ENCODE measurements at regions of chr1 and their contacts with region 1.

Region 1: GRCh38 chr1:149899460-149900293 is at the start of gene BOLA1:
- DNase-seq: peak; percentile 96
- total RNA-seq, gene BOLA1: 13.8 TPM

Region 2: GRCh38 chr1:149927503-149928387 is 28.1 kb after region 1 on chr1 and contains the start of gene SF3B4:
- intact Hi-C with region 1: loop called (anchors 2 kb)
- DNase-seq: peak; percentile 99
- total RNA-seq, gene SF3B4: 30.3 TPM

Region 3: GRCh38 chr1:150053926-150054325 is 154.2 kb after region 1 on chr1:
- intact Hi-C with region 1: loop called (anchors 10 kb)
- DNase-seq: no peak

Region 4: DNA sequence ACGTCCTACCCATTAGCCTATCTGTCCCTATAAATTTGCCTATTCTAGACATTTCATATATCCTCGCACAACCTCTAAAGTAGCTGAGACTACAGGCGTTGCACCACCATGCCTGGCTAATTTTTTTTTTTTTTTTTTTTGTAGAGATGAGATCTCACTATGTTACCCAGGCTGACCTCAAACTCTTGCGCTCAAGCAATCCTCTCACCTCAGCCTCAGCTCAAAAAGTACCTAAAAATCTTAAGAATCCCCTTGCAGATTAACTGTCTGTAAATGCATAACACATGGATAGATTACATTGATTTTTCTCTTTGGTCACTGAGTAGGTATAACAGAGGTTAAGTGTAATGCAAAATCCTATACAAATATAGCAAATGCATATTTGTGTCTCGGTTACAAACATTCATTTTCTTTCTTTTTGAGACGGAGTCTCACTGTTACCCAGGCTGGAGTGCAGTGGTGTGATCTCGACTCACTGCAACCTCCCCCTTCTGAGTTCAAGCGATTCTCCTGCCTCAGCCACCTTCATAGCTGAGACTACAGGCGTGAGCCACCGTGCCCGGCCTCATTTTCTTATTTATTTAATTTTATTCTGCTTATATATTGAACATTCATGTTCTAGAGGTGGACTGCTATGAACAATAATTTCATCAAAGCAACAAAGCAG is 818.7 kb after region 1 on chr1:
- intact Hi-C with region 1: no loop called
- DNase-seq: no peak